SK-N-SH (cell line): ENCODE measurements at regions of chr3 and their contacts with region 1.

Region 1: GRCh38 chr3:71583566-71584449 is at the start of gene FOXP1:
- DNase-seq: peak; percentile 79
- H3K4me3 ChIP-seq: peak within 1 kb of the TSS; percentile 75 to 86
- H3K27ac ChIP-seq: peak within 1 kb of the TSS; percentile 89 to 92
- H3K4me1 ChIP-seq: peaks cover 10 to 26% of the 10 kb centered on the region in 2 experiments; a peak in 3 of 4 replicates
- H3K27me3 ChIP-seq: no peaks in the 10 kb centered on the region
- CTCF ChIP-seq: no peak
- EP300 ChIP-seq: peak; percentile 2 to 3; a peak in 1 of 4 replicates
- RAD21 ChIP-seq: no peak
- polyA plus RNA-seq, gene FOXP1: 8.8 and 10.5 TPM in 2 replicates

Region 2: GRCh38 chr3:70716832-70717231 is 867.0 kb before region 1 on chr3:
- CTCF ChIA-PET with region 1: interaction called, 13 read pairs
- POLR2A ChIA-PET with region 1: no interaction called
- DNase-seq: peak; percentile 3
- H3K4me3 ChIP-seq: no peak overlapping the region
- H3K27ac ChIP-seq: no peak overlapping the region
- H3K4me1 ChIP-seq: no peaks in the 10 kb centered on the region
- H3K27me3 ChIP-seq: no peaks in the 10 kb centered on the region
- CTCF ChIP-seq: peak; percentile 68
- EP300 ChIP-seq: no peak
- RAD21 ChIP-seq: peak; percentile 70

Region 3: GRCh38 chr3:71006810-71007785 is 576.7 kb before region 1 on chr3:
- CTCF ChIA-PET with region 1: interaction called, 43 read pairs
- POLR2A ChIA-PET with region 1: interaction called, 3 read pairs
- DNase-seq: no peak
- H3K4me3 ChIP-seq: no peak overlapping the region
- H3K27ac ChIP-seq: peak overlapping the region in 1 of 2 experiments; percentile 36; a peak in 1 of 4 replicates
- H3K4me1 ChIP-seq: peaks cover 2 to 16% of the 10 kb centered on the region in 2 experiments; a peak in 2 of 4 replicates
- H3K27me3 ChIP-seq: no peaks in the 10 kb centered on the region
- CTCF ChIP-seq: peak; percentile 68
- EP300 ChIP-seq: no peak
- RAD21 ChIP-seq: peak; percentile 82

Region 4: GRCh38 chr3:71601811-71602210 is 18.0 kb after region 1 on chr3:
- CTCF ChIA-PET with region 1: interaction called, 49 read pairs
- POLR2A ChIA-PET with region 1: no interaction called
- DNase-seq: no peak
- H3K4me3 ChIP-seq: no peak overlapping the region
- H3K27ac ChIP-seq: no peak overlapping the region
- H3K4me1 ChIP-seq: no peaks in the 10 kb centered on the region
- H3K27me3 ChIP-seq: no peaks in the 10 kb centered on the region
- CTCF ChIP-seq: no peak
- EP300 ChIP-seq: no peak
- RAD21 ChIP-seq: no peak

Region 5: GRCh38 chr3:71710906-71711494 is 127.2 kb after region 1 on chr3:
- CTCF ChIA-PET with region 1: no interaction called
- POLR2A ChIA-PET with region 1: no interaction called
- DNase-seq: peak; percentile 72
- H3K4me3 ChIP-seq: no peak overlapping the region; a peak in 1 of 4 replicates
- H3K27ac ChIP-seq: no peak overlapping the region
- H3K4me1 ChIP-seq: no peaks in the 10 kb centered on the region; a peak in 1 of 4 replicates
- H3K27me3 ChIP-seq: no peaks in the 10 kb centered on the region
- CTCF ChIP-seq: peak; percentile 79
- EP300 ChIP-seq: no peak
- RAD21 ChIP-seq: peak; percentile 93